ENCODE measurements at regions of chr3 and their contacts with region 1.

Region 1: GRCh38 chr3:195259475-195260279 is 11.3 kb downstream of the XXYLT1 start:
- DNase-seq: peak; percentile 91 to 97 (median 95)
- ATAC-seq: peak; percentile 90
- H3K4me3 ChIP-seq: peak overlapping the region; percentile 55
- H3K27ac ChIP-seq: peak overlapping the region; percentile 89
- H3K4me1 ChIP-seq: peaks cover 14 to 41% of the 10 kb centered on the region in 2 experiments
- H3K27me3 ChIP-seq: no peaks in the 10 kb centered on the region
- CTCF ChIP-seq: peak; percentile 46 to 73 (median 68); a peak in 5 of 6 replicates
- EP300 ChIP-seq: no peak; the same call in 1 of the 2 replicates
- POLR2A ChIP-seq: no peak; the same call in none of the 2 replicates
- RAD21 ChIP-seq: peak; percentile 90 to 96

Region 2: DNA sequence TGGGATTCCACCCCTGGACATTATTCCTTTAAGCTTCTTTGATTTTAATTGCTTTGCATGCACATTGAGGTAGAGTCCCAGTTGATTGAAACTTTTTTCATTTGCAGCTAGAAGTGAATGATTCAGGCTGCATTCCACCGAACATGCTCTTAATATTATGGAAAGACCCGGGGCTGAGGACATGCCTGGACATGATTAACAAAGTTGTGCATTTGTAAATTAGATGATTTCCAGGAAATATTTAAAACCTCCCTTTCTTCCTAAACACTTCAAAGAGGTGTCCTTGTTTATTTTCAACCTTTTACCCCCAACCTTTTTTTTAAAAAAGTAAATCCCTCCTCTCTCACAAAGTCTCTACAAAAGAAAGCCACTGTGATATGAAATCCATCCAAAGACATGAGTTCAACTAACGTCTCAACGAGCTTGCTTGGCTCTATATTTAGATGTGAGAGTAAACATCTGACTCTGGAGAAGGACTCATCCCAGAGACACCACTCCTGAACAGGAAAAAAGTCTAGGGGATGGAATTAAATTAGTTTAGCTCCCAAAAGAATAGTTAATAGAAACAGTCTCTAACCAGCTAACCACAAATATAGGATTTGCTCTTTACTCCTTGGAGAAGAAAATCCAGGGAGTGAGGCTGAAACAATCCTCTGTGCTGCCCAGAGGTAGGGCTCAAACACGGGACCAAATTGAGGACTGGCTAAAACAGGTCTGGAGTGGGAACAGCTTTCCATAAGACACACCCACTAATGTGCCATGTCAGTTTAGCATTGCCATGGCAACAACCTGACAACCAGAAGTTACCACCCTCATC is 71.9 kb before region 1 on chr3:
- CTCF ChIA-PET with region 1: no interaction called
- POLR2A ChIA-PET with region 1: no interaction called
- in situ Hi-C with region 1: no loop called
- intact Hi-C with region 1: loop called (anchors 5 kb)
- DNase-seq: no peak
- ATAC-seq: peak; percentile 57
- H3K4me3 ChIP-seq: no peak overlapping the region
- H3K27ac ChIP-seq: peak overlapping the region; percentile 25; the same call in 1 of the 3 replicates
- H3K4me1 ChIP-seq: peaks cover 8 to 34% of the 10 kb centered on the region in 2 experiments; a peak in 4 of 5 replicates
- H3K27me3 ChIP-seq: no peaks in the 10 kb centered on the region
- CTCF ChIP-seq: no peak
- EP300 ChIP-seq: no peak
- POLR2A ChIP-seq: no peak
- RAD21 ChIP-seq: no peak

Region 3: GRCh38 chr3:195238586-195239118 is 21.0 kb before region 1 on chr3:
- CTCF ChIA-PET with region 1: no interaction called
- POLR2A ChIA-PET with region 1: no interaction called
- in situ Hi-C with region 1: no loop called
- intact Hi-C with region 1: no loop called
- DNase-seq: no peak
- ATAC-seq: no peak
- H3K4me3 ChIP-seq: no peak overlapping the region
- H3K27ac ChIP-seq: no peak overlapping the region
- H3K4me1 ChIP-seq: no peaks in the 10 kb centered on the region
- H3K27me3 ChIP-seq: no peaks in the 10 kb centered on the region
- CTCF ChIP-seq: no peak
- EP300 ChIP-seq: no peak
- POLR2A ChIP-seq: no peak
- RAD21 ChIP-seq: no peak